ENCODE measurements at regions of chr11 and their contacts with region 1.

Region 1: GRCh38 chr11:66559142-66559865 is 9.1 kb downstream of the CTSF start:
- DNase-seq: peak; percentile 80

Region 2: DNA sequence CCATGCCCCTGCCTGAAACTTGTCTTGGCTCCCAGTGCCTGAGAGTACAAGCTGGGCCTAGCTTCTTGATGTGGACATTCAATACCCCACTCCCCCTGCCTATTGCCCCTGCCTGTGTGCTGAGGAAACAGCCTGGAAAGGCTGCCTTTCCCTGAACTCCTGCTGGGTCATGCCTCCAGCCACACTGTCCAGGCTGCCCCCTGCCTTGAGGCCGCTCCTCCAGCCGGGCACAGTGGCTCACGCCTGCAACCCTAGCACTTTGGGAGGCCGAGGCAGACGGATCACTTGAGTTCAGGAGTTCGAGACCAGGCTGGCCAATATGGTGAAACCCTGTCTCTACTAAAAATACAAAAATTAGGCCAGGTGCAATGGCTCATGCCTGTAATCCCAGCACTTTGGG is 43.8 kb after region 1 on chr11:
- intact Hi-C with region 1: loop called in 1 of 2 experiments (anchors 2 kb)
- DNase-seq: no peak